ENCODE measurements at regions of chr19 and their contacts with region 1.

Region 1: DNA sequence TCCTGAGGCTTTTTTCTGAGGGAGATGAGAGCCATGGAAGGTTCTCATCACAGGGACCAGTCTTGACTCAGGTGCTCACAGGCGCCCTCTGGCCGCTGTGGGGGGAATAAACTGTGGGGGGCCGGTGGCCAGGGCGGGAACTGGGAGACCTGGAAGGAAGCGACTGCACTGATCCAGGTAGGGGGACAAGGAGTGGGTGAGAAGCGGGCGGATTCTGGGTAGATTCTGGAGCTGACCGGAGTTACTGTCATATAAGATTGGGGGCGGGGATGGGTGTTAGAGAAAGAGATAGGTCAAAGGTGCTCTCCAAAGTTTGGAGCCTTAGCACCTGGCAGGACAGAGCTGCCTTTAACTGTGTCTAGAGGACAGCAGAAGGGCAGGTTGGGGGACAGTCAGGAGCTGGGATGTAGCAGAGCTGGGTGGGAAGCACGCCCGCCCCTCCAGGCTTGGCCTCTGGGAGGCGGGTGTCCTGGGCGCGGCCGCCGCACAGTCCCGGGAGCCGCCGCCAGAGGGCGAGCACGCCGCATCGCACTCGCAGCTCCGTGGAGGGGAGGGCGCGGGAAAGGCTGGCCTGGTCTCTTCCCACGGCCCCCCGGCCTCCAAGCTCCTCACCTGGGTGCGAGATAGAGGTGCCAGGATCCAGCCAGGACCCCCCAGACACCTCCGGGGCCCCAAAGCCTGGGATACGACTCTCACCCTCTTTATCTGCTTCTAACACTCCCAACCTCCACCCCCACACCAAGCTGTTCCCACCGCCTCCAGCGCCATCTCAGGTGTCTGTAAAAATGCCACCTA is 4.2 kb upstream of the DAND5 start:
- DNase-seq: peak; percentile 85 to 93 (median 86)
- ATAC-seq: peak; percentile 98
- H3K4me3 ChIP-seq: peak overlapping the region; percentile 64
- H3K27ac ChIP-seq: peak overlapping the region; percentile 92
- H3K4me1 ChIP-seq: peaks cover 9 to 24% of the 10 kb centered on the region in 2 experiments; a peak in 4 of 5 replicates
- H3K27me3 ChIP-seq: no peaks in the 10 kb centered on the region
- CTCF ChIP-seq: peak; percentile 88 to 99 (median 98)
- EP300 ChIP-seq: no peak
- POLR2A ChIP-seq: peak; percentile 48; the same call in 1 of the 2 replicates
- RAD21 ChIP-seq: peak; percentile 69 to 83; a peak in 3 of 4 replicates

Region 2: DNA sequence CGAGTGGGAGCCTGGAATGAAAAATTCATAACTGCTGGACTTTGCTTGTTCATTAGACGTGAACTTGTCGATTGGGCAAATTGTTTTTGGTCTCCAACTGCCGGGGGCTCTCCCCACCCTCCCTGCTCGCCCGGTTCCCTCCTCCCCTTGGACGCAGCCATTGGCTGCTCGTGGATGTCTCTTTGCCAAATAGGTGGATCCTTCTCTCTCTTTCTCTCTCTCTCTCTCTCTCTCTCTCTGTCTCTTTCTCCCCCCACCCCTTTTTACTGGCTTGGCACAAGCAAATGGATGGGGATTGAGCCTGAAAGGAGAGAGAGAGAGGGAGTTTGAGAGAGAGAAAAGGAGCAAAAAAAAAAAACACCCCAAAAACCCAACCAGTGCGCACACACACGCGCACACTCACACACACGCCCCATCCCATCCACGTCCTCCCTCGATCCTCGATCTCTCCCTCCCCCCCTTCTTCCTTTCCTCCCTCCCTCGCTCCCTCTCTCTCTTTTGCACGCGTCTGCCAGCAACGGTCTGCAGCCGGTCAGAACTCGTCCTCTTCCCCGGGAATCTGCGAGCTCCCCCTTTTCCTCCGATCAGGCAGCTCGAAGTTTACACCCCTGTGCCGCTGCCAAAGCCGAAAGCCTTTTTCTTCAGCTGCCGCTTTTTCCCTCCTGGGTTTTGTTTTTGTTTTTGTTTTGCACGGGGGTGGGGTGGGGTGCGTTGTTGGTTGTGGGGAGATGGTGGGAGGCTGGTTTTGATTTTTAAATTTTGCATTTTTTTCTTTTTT is 57.8 kb after region 1 on chr19:
- CTCF ChIA-PET with region 1: no interaction called
- POLR2A ChIA-PET with region 1: no interaction called
- in situ Hi-C with region 1: no loop called
- intact Hi-C with region 1: no loop called
- DNase-seq: peak; percentile 68 to 76 (median 72)
- ATAC-seq: peak; percentile 79
- H3K4me3 ChIP-seq: peak overlapping the region; percentile 41
- H3K27ac ChIP-seq: peak overlapping the region; percentile 62
- H3K4me1 ChIP-seq: peaks cover 22 to 40% of the 10 kb centered on the region in 2 experiments; a peak in 4 of 5 replicates
- H3K27me3 ChIP-seq: no peaks in the 10 kb centered on the region
- CTCF ChIP-seq: no peak
- EP300 ChIP-seq: peak; percentile 39; the same call in 1 of the 2 replicates
- POLR2A ChIP-seq: no peak; the same call in 1 of the 2 replicates
- RAD21 ChIP-seq: no peak

Region 3: GRCh38 chr19:13060964-13061927 is 96.0 kb after region 1 on chr19:
- CTCF ChIA-PET with region 1: interaction called, 14 read pairs
- POLR2A ChIA-PET with region 1: interaction called, 3 read pairs
- in situ Hi-C with region 1: no loop called
- intact Hi-C with region 1: no loop called
- DNase-seq: peak; percentile 84 to 89 (median 88)
- ATAC-seq: peak; percentile 98
- H3K4me3 ChIP-seq: peak overlapping the region; percentile 12; the same call in 1 of the 2 replicates
- H3K27ac ChIP-seq: no peak overlapping the region
- H3K4me1 ChIP-seq: peaks cover 17 to 62% of the 10 kb centered on the region in 2 experiments; a peak in 4 of 5 replicates
- H3K27me3 ChIP-seq: no peaks in the 10 kb centered on the region
- CTCF ChIP-seq: peak; percentile 92 to 97 (median 95)
- EP300 ChIP-seq: no peak
- POLR2A ChIP-seq: no peak
- RAD21 ChIP-seq: peak; percentile 88 to 91

Region 4: GRCh38 chr19:13093407-13094105 is 128.3 kb after region 1 on chr19:
- CTCF ChIA-PET with region 1: interaction called, 46 read pairs
- POLR2A ChIA-PET with region 1: interaction called, 8 read pairs
- in situ Hi-C with region 1: no loop called
- intact Hi-C with region 1: no loop called
- DNase-seq: peak; percentile 83 to 92 (median 87)
- ATAC-seq: peak; percentile 57
- H3K4me3 ChIP-seq: no peak overlapping the region
- H3K27ac ChIP-seq: peak overlapping the region; percentile 10; the same call in 1 of the 3 replicates
- H3K4me1 ChIP-seq: peaks cover 36 to 84% of the 10 kb centered on the region in 2 experiments
- H3K27me3 ChIP-seq: no peaks in the 10 kb centered on the region
- CTCF ChIP-seq: peak; percentile 94 to 96 (median 95)
- EP300 ChIP-seq: no peak
- POLR2A ChIP-seq: no peak
- RAD21 ChIP-seq: peak; percentile 97 to 98

Region 5: GRCh38 chr19:13244920-13245319 is 279.7 kb after region 1 on chr19:
- CTCF ChIA-PET with region 1: no interaction called
- POLR2A ChIA-PET with region 1: no interaction called
- in situ Hi-C with region 1: loop called (anchors 5 kb)
- intact Hi-C with region 1: no loop called
- DNase-seq: no peak
- ATAC-seq: peak; percentile 50; the same call in 1 of the 3 replicates
- H3K4me3 ChIP-seq: no peak overlapping the region
- H3K27ac ChIP-seq: no peak overlapping the region
- H3K4me1 ChIP-seq: peaks cover 3 to 10% of the 10 kb centered on the region in 2 experiments; a peak in 3 of 5 replicates
- H3K27me3 ChIP-seq: peaks cover 0 to 30% of the 10 kb centered on the region in 2 experiments; a peak in 3 of 5 replicates
- CTCF ChIP-seq: no peak
- EP300 ChIP-seq: no peak
- POLR2A ChIP-seq: no peak
- RAD21 ChIP-seq: no peak

Region 6: DNA sequence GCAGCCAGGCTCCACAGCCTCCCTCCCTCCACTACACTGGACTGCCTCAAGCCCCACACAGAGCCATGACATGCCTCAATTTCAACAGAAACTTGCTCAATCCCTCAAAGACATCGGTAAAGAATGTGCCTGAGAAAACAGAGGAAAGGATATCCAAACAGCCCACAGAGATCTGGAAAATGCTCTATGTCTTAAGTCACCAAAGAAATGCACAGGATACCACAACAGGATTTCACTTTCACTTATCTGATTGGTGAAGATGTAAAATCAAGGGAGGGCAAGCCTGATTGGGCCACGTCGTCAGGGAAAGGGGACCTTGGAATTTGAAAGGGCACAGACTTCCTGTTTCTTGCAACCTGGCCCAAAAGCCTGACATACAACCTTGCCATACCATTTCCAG is 526.9 kb after region 1 on chr19:
- CTCF ChIA-PET with region 1: no interaction called
- POLR2A ChIA-PET with region 1: no interaction called
- in situ Hi-C with region 1: no loop called
- intact Hi-C with region 1: no loop called
- DNase-seq: no peak
- ATAC-seq: no peak
- H3K4me3 ChIP-seq: no peak overlapping the region
- H3K27ac ChIP-seq: no peak overlapping the region
- H3K4me1 ChIP-seq: no peaks in the 10 kb centered on the region
- H3K27me3 ChIP-seq: no peaks in the 10 kb centered on the region
- CTCF ChIP-seq: no peak
- EP300 ChIP-seq: no peak
- POLR2A ChIP-seq: no peak
- RAD21 ChIP-seq: no peak

Measured in K562 (cell line).